HepG2 (cell line): ENCODE measurements at regions of chr5 and their contacts with region 1.

Region 1: DNA sequence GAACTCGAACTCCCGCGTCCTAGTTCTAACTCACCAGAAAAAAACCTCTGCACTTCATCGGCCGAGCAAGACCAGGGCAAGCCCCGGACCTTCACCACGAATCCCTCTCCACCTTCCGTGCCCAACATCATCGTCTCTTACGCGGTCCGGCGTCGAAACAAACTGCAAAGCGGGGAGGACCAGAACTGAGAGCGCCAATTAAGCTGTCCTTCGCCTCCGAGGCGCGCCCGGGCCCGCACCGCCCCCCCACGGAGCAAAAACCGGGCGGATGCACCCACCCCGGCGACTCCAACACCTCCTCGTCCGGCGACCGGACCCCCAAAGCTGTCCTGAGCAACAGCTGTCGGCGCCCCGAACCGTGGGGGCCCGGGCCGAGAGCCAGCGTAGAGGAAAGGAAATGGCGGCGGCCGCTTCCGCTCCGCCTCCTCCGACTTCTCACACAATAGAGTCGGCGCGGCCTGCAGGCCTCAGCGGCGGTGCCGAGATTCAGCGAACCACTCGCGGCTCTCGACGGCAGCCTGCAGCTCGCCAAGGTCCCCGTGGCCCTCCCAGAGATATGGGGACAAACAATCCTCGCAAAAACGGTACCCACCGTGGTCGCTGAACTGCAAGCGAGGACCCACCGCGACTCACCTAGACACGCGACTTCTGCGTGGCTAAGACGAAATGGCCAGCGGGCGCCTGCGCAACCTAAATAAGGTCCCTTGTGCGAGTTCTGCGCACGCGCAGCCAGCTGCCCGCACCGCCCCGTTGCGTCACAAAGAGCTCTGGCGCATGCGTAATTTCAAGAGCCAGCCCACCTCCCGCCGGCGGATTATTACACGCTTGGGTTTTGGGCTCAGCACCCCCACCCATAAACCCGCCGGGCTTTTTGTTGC is at the start of gene HNRNPH1:
- DNase-seq: peak; percentile 97
- ATAC-seq: peak; percentile 62
- H3K4me3 ChIP-seq: peak within 1 kb of the TSS; percentile 96 to 99 (median 97)
- H3K27ac ChIP-seq: peak within 1 kb of the TSS; percentile 97
- H3K4me1 ChIP-seq: peaks cover 51% of the 10 kb centered on the region
- H3K27me3 ChIP-seq: no peaks in the 10 kb centered on the region; a peak in 1 of 5 replicates
- CTCF ChIP-seq: peak; percentile 2
- EP300 ChIP-seq: no peak
- POLR2A ChIP-seq: peak; percentile 100
- RAD21 ChIP-seq: peak; percentile 46
- total RNA-seq, gene HNRNPH1: 807 and 1,064 TPM in 2 replicates

Region 2: GRCh38 chr5:179113945-179114641 is 509.1 kb before region 1 on chr5:
- CTCF ChIA-PET with region 1: no interaction called
- POLR2A ChIA-PET with region 1: no interaction called
- in situ Hi-C with region 1: no loop called
- intact Hi-C with region 1: no loop called
- DNase-seq: no peak
- ATAC-seq: no peak
- H3K4me3 ChIP-seq: no peak overlapping the region
- H3K27ac ChIP-seq: no peak overlapping the region
- H3K4me1 ChIP-seq: no peaks in the 10 kb centered on the region
- H3K27me3 ChIP-seq: peaks cover 1 to 12% of the 10 kb centered on the region in 2 experiments; a peak in 1 of 5 replicates
- CTCF ChIP-seq: no peak
- EP300 ChIP-seq: no peak
- POLR2A ChIP-seq: no peak
- RAD21 ChIP-seq: no peak

Region 3: DNA sequence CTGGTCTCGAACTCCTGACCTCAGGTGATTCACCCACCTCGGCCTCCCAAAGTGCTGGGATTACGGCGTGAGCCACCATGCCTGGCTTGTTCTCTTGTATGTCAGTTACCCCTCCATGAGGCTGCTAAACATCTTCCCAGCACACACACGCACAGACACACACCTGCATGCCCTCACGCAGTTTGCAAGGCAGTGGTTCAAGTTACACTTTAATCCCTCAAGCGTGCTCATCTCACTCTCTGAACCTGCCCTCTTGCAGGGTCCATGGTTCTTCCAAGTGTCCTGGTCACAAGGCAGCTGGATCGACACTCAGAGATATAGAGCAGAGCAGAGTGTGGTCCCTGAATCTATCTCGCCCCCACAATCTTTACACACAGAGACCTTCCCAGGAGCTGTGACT is 107.0 kb before region 1 on chr5:
- CTCF ChIA-PET with region 1: no interaction called
- POLR2A ChIA-PET with region 1: no interaction called
- in situ Hi-C with region 1: no loop called
- intact Hi-C with region 1: no loop called
- DNase-seq: no peak
- ATAC-seq: no peak
- H3K4me3 ChIP-seq: no peak overlapping the region
- H3K27ac ChIP-seq: no peak overlapping the region
- H3K4me1 ChIP-seq: peaks cover 18% of the 10 kb centered on the region
- H3K27me3 ChIP-seq: no peaks in the 10 kb centered on the region
- CTCF ChIP-seq: no peak
- EP300 ChIP-seq: no peak
- POLR2A ChIP-seq: no peak
- RAD21 ChIP-seq: no peak

Region 4: DNA sequence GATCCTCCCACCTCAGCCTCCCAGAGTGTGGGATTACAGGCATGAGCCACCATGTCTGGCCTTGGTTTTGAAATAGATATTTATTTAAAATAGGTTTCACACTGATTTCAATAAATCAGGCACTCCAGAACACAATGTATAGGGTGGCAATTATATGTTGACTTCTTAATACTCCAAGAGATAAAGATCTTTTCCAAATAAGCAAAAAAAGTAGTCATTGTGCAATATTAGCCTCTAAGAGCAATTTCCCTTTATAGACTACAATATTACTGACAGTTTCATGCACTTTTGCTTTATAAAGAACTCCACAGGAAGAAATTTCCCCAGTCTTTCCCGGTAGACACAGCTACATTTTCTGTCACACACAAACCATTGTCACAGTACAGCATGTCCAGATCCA is 96.3 kb before region 1 on chr5:
- CTCF ChIA-PET with region 1: no interaction called
- POLR2A ChIA-PET with region 1: no interaction called
- in situ Hi-C with region 1: no loop called
- intact Hi-C with region 1: no loop called
- DNase-seq: no peak
- ATAC-seq: no peak
- H3K4me3 ChIP-seq: no peak overlapping the region
- H3K27ac ChIP-seq: no peak overlapping the region
- H3K4me1 ChIP-seq: no peaks in the 10 kb centered on the region
- H3K27me3 ChIP-seq: peaks cover 4 to 8% of the 10 kb centered on the region in 2 experiments; a peak in 3 of 5 replicates
- CTCF ChIP-seq: no peak
- EP300 ChIP-seq: no peak
- POLR2A ChIP-seq: no peak
- RAD21 ChIP-seq: no peak

Region 5: DNA sequence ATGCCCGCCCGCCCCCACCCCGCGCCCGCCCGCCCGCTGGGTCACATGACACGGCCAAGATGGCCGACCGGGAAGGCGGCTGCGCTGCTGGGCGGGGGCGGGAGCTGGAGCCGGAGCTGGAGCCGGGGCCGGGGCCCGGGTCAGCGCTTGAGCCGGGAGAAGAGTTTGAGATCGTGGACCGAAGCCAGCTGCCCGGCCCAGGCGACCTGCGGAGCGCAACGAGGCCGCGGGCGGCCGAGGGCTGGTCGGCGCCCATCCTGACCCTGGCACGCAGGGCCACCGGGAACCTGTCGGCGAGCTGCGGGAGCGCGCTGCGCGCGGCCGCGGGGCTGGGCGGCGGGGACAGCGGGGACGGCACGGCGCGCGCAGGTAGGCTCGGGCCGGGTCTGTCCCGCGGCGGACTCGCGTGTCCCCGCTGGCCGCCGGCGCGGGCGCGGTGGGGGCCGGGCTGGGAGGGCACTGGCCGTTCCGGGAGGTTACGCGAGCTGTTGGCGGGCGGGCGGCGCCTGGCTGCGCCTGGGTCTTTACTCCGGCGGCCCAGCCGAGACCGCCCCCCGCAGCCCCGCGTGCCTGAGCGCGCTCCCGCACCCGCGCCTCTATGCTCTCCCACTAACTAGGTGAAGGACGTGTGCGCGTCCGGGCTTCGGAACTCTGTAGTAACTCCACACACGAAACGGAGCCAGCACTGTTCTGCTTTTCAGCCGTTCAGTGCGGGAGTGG is 72.6 kb before region 1 on chr5 and contains the start of gene RUFY1:
- CTCF ChIA-PET with region 1: no interaction called
- POLR2A ChIA-PET with region 1: interaction called, 28 read pairs
- in situ Hi-C with region 1: no loop called
- intact Hi-C with region 1: no loop called
- DNase-seq: peak; percentile 47
- ATAC-seq: peak; percentile 75
- H3K4me3 ChIP-seq: peak within 1 kb of the TSS; percentile 72 to 98 (median 94)
- H3K27ac ChIP-seq: peak within 1 kb of the TSS; percentile 93
- H3K4me1 ChIP-seq: peaks cover 52% of the 10 kb centered on the region
- H3K27me3 ChIP-seq: no peaks in the 10 kb centered on the region
- CTCF ChIP-seq: no peak
- EP300 ChIP-seq: no peak
- POLR2A ChIP-seq: peak in 1 of 2 experiments; percentile 80
- RAD21 ChIP-seq: peak; percentile 13
- total RNA-seq, gene RUFY1: 28.6 and 31.9 TPM in 2 replicates

Region 6: DNA sequence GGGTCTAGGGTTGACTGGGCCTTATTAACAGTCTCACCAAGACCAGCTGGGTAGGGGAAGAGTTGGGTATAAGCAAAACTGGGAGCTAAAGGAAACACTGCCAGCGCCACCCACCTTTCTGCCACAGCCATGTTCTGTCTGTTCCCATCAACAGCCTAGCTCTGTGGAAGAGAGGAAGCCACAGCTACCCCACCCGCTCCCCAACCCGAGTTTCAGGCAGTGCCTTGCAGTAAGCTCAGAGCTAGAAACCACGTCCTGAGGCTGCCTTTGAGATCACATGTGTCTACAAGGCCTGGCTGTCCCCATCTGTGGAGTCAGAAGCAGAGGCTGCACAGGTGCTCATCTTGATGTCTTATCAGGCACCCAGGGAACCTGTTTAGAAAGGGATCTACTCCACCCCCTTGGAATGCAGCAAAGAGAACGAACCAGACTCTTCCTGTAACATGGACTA is 15.1 kb before region 1 on chr5:
- CTCF ChIA-PET with region 1: no interaction called
- POLR2A ChIA-PET with region 1: interaction called, 102 read pairs
- in situ Hi-C with region 1: no loop called
- intact Hi-C with region 1: no loop called
- DNase-seq: no peak
- ATAC-seq: peak; percentile 0
- H3K4me3 ChIP-seq: no peak overlapping the region
- H3K27ac ChIP-seq: no peak overlapping the region
- H3K4me1 ChIP-seq: peaks cover 18% of the 10 kb centered on the region
- H3K27me3 ChIP-seq: no peaks in the 10 kb centered on the region
- CTCF ChIP-seq: no peak
- EP300 ChIP-seq: no peak
- POLR2A ChIP-seq: peak; percentile 41 to 68; a peak in 3 of 4 replicates
- RAD21 ChIP-seq: no peak

Region 7: DNA sequence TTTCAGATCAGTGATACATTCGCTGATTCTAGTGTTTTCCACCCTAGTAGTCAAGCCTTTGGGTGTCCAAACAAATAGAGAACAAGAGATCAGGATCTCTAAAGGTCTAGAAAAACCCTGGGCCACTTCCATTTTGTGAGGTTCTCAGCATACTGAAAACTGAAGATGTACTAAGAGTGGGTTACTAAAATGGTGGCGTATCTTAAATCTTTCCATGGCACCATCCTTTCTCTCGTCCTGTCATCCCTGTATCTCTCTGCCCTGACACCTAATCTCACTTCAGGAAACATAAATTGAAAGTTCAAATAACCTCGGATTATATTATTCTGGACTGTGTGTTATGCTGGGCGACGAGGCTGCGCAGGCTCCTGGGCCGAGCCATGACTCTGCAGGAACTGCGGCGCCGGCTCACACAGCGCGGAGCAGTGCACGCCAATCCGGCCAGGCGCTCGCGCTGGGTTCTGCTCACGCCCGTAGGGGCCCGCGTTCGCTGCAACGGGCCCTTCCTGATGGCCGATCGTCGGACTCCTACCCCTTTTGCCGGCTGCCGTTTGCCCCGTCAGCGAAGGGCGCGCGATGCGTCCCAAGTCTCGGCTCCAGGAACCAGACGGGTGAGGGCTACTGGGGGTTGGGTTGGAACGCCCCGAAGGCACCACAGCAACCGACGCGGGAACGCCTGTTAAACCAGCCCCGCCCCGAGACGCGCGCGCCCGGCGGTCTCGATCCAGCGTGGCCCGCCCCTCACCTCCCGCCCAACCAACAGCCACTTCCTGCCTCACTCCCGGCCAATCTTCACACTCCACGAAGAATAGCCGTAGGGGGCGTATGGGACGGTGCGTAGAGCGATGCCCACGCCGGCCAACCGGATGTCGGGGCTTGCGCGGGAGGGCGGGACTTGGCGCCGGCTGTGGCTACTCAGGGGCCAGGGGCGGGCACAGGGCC is 75.0 kb after region 1 on chr5:
- CTCF ChIA-PET with region 1: no interaction called
- POLR2A ChIA-PET with region 1: interaction called, 37 read pairs
- in situ Hi-C with region 1: no loop called
- intact Hi-C with region 1: loop called (anchors 5 kb)
- DNase-seq: peak; percentile 98
- ATAC-seq: peak; percentile 95
- H3K4me3 ChIP-seq: peak overlapping the region; percentile 74 to 91 (median 91)
- H3K27ac ChIP-seq: peak overlapping the region; percentile 96
- H3K4me1 ChIP-seq: peaks cover 53% of the 10 kb centered on the region
- H3K27me3 ChIP-seq: no peaks in the 10 kb centered on the region; a peak in 1 of 5 replicates
- CTCF ChIP-seq: 0 out of 2 replicates have a peak, but pooled peaks have one; percentile 11
- EP300 ChIP-seq: peak in 1 of 2 experiments; percentile 34; a peak in 2 of 4 replicates
- POLR2A ChIP-seq: peak; percentile 68 to 86
- RAD21 ChIP-seq: peak; percentile 65

Region 8: DNA sequence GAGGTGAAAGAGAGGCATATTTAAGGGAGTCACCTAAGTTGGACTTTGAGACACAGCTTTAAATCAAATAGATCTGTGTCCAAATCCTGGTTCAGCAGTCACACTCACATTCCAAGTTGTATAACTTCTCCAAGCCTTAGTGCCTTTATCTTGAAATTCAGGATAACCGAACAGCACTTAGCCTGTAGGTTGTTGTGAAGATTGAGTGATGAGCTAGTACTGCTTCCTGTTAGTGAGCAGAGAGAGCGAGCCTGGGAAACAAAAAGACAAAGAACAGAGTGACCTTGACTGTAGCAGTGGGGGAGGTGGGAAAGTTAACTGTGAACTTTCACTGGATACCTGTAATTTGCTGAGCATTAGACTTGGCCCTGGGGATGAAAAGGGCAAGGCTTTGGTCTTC is 131.8 kb after region 1 on chr5:
- CTCF ChIA-PET with region 1: no interaction called
- POLR2A ChIA-PET with region 1: interaction called, 10 read pairs
- in situ Hi-C with region 1: no loop called
- intact Hi-C with region 1: no loop called
- DNase-seq: peak; percentile 84
- ATAC-seq: peak; percentile 93
- H3K4me3 ChIP-seq: peak overlapping the region in 2 of 3 experiments; percentile 13 to 20; a peak in 2 of 6 replicates
- H3K27ac ChIP-seq: peak overlapping the region; percentile 72
- H3K4me1 ChIP-seq: peaks cover 45% of the 10 kb centered on the region
- H3K27me3 ChIP-seq: no peaks in the 10 kb centered on the region
- CTCF ChIP-seq: no peak
- EP300 ChIP-seq: peak in 1 of 2 experiments; percentile 56; a peak in 2 of 4 replicates
- POLR2A ChIP-seq: no peak
- RAD21 ChIP-seq: no peak

Region 9: GRCh38 chr5:179821581-179822432 is 198.6 kb after region 1 on chr5:
- CTCF ChIA-PET with region 1: no interaction called
- POLR2A ChIA-PET with region 1: interaction called, 12 read pairs
- in situ Hi-C with region 1: no loop called
- intact Hi-C with region 1: no loop called
- DNase-seq: peak; percentile 80
- ATAC-seq: peak; percentile 48
- H3K4me3 ChIP-seq: peak overlapping the region; percentile 97 to 99 (median 99)
- H3K27ac ChIP-seq: peak overlapping the region; percentile 99
- H3K4me1 ChIP-seq: peaks cover 81% of the 10 kb centered on the region
- H3K27me3 ChIP-seq: no peaks in the 10 kb centered on the region
- CTCF ChIP-seq: peak; percentile 37
- EP300 ChIP-seq: no peak
- POLR2A ChIP-seq: peak in 1 of 2 experiments; percentile 89; a peak in 2 of 4 replicates
- RAD21 ChIP-seq: no peak